ENCODE measurements at regions of chr22 and their contacts with region 1.

Region 1: GRCh38 chr22:50326959-50327710 is at the start of gene DENND6B:
- DNase-seq: peak; percentile 89
- ATAC-seq: peak; percentile 95 to 98
- H3K4me3 ChIP-seq: peak within 1 kb of the TSS; percentile 81
- H3K27ac ChIP-seq: peak within 1 kb of the TSS; percentile 98
- H3K4me1 ChIP-seq: peaks cover 18% of the 10 kb centered on the region
- H3K27me3 ChIP-seq: no peaks in the 10 kb centered on the region
- CTCF ChIP-seq: peak; percentile 55
- total RNA-seq, gene DENND6B: 14.4 TPM

Region 2: DNA sequence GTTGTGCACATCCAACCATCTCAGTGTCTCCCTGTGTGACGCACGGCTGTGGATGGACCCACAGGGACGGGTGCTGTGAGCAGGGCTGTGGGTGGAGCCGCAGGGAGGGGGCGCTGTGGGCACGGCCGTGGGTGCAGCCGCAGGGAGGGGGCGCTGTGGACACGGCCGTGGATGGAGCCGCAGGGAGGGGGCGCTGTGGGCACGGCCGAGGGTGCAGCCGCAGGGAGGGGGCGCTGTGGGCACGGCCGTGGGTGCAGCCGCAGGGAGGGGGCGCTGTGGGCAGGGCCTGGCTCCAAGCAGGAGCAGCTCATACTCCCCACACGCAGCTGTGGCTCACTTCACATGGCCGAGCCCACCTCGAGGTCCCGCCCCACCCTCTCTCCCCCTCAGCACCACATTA is 51.0 kb before region 1 on chr22:
- intact Hi-C with region 1: loop called (anchors 10 kb)
- DNase-seq: peak; percentile 88
- ATAC-seq: peak; percentile 89 to 93
- H3K4me3 ChIP-seq: no peak overlapping the region
- H3K27ac ChIP-seq: peak overlapping the region; percentile 41
- H3K4me1 ChIP-seq: peaks cover 19% of the 10 kb centered on the region
- H3K27me3 ChIP-seq: no peaks in the 10 kb centered on the region
- CTCF ChIP-seq: peak; percentile 68